ENCODE measurements at regions of chr1 and their contacts with region 1.

Region 1: GRCh38 chr1:28602536-28603439 is 10.7 kb downstream of the RAB42 start:
- DNase-seq: peak; percentile 42
- H3K4me3 ChIP-seq: no peak overlapping the region
- CTCF ChIP-seq: peak; percentile 57

Region 2: DNA sequence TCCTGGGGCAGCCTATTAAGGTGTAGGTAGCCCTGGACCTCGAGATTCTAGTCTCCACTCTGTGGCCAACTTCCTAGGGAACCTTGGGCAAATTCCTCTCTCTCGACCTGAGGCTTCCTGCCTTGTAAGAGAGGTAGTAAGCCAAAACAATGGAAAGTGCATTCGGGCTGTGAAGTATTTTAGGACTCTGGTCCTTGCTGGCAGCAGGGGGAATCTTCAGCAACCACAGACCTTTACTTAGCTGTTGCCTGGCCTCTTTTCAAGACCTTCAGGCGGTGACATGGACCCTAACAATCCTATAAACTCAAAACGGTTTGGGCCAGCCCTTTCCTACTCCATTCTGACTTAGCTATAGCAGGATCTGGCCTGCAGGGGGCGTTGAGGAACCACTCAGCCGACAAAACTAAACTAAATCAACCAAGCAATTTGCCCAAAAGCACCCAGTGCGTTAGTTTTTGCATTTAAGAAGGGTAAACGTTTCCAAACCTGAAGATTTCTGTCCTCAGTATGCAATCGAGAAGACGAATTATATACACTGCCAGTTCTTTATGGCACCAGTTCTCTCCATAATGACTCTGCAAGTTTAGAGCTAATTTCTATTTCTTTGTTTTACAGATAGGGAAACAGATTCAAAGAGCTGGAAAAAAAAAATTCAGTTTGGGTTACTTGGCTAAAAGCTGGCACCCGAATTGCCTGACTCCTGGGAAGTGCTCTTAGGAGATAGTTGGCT is 354.3 kb before region 1 on chr1:
- CTCF ChIA-PET with region 1: interaction called, 39 read pairs
- POLR2A ChIA-PET with region 1: interaction called, 11 read pairs
- DNase-seq: no peak
- H3K4me3 ChIP-seq: peak overlapping the region; percentile 2; the same call in 1 of the 2 replicates
- CTCF ChIP-seq: peak; percentile 83

Region 3: DNA sequence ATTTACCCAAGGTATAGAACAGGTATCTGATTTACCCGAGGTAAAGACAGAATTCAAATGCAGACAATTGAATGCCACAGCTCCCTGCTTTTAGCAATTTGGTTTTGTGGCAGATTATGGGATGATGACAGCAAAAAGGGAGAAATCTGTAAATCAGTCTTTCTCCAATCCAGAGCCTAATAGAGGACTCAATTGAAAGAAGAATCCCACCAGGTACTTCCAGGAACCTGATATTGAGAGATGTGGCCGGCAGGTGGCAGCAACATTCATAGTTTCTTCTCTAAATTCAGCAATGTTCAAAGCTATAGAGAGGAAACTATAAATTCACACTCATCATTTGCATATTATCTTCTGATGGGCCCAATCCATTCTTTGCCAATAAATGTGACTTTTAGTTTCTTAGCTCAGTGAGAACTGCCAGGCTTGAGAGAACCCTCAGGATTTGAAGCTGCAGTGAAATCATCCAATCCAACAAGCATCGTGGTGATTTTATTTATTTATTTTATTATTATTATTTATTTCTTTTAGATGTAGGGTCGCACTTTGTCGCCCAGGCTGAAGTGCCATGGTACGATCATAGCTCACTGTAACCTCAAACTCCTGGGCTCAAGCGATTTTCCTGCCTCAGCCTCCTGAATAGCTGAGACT is 243.1 kb before region 1 on chr1:
- CTCF ChIA-PET with region 1: interaction called, 144 read pairs
- POLR2A ChIA-PET with region 1: no interaction called
- DNase-seq: no peak
- H3K4me3 ChIP-seq: no peak overlapping the region
- CTCF ChIP-seq: peak; percentile 57

Region 4: GRCh38 chr1:28510665-28511440 is 91.9 kb before region 1 on chr1:
- CTCF ChIA-PET with region 1: interaction called, 114 read pairs
- POLR2A ChIA-PET with region 1: interaction called, 30 read pairs
- DNase-seq: no peak
- H3K4me3 ChIP-seq: no peak overlapping the region; the same call in none of the 2 replicates
- CTCF ChIP-seq: no peak

Region 5: GRCh38 chr1:28581536-28582247 is 21.1 kb before region 1 on chr1:
- CTCF ChIA-PET with region 1: interaction called, 31 read pairs
- POLR2A ChIA-PET with region 1: interaction called, 56 read pairs
- DNase-seq: peak; percentile 61
- H3K4me3 ChIP-seq: peak overlapping the region; percentile 93
- CTCF ChIP-seq: no peak

Region 6: GRCh38 chr1:28613175-28613574 is 10.4 kb after region 1 on chr1:
- CTCF ChIA-PET with region 1: interaction called, 61 read pairs
- POLR2A ChIA-PET with region 1: no interaction called
- DNase-seq: no peak
- H3K4me3 ChIP-seq: no peak overlapping the region
- CTCF ChIP-seq: no peak

Region 7: DNA sequence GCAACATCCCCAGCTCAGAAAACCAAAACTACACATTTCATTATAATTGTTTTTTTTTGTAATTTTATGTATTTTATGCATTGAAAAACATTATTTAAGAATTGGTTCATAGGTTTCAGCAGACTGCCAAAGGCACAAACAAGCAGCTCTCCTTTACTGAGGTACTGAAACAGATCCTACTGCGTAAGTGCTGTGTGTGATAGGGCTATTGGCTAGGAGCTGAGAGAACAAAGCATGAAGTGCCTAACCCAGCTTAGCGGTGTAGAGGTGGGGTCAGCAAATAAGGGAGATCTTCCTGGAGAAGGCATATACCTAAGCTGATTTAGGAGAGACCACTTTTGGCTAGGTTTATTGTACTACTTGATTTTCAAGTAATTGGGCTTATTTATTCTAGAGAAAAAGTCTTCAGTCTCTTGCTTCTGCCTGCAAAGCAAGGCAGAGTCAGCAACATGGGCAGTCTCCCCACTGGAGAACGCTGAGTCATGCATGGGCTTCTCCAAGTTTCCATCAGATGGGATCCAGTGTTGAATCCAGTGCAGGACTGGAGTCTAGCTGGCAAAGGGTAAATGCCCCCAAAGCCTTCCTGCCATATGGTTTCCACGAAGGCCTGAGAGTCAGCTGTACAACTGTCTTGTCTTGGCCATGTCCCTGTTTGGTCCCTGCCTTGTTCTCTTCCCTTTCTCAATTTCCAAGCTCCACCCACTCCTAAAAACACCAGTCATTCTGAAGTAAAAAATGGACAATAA is 116.0 kb after region 1 on chr1:
- CTCF ChIA-PET with region 1: no interaction called
- POLR2A ChIA-PET with region 1: no interaction called
- DNase-seq: no peak
- H3K4me3 ChIP-seq: no peak overlapping the region
- CTCF ChIP-seq: no peak

Region 8: DNA sequence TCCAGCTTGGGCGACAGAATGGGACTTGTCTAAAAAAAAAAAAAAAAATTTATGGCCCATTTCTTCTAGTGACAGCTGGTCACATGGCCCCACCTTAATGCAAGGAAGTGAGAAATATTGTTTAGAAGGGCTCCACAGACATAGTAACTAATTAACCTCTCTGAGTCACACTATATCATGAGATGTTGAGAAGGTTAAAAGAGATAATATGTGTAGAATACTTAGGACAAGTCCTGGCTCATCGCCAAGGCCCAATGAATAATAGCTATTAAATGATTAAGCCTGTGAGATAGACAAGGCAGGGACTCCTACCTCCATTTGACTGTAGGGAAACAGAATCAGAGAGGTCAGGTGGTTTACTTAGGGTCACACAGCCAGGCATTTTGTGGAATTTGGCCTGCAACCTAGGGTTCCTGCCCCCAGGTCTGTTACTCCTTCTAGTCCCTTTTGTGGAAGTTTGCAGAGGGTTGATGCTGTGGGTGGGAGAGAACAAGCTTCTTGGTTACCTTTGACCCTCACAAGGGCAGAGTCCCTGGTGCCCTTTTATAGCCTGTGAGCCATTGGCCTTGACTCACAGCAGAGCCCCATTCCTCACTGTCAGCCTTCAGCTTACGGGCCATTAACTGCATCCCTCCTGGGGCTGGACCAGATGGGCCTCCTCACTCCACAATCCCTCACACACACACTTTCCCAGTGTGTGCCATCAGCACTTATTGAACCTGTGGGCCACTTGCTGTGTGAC is 257.7 kb after region 1 on chr1:
- CTCF ChIA-PET with region 1: no interaction called
- POLR2A ChIA-PET with region 1: no interaction called
- DNase-seq: no peak
- H3K4me3 ChIP-seq: no peak overlapping the region
- CTCF ChIP-seq: no peak

Region 9: GRCh38 chr1:28910379-28911115 is 307.8 kb after region 1 on chr1:
- CTCF ChIA-PET with region 1: no interaction called
- POLR2A ChIA-PET with region 1: no interaction called
- DNase-seq: no peak
- H3K4me3 ChIP-seq: no peak overlapping the region
- CTCF ChIP-seq: no peak

Measured in AG04449 (cell line).